Right ventricle myocardium inferior (tissue), 1 donor: ENCODE measurements at regions of chr17 and their contacts with region 1.

Region 1: DNA sequence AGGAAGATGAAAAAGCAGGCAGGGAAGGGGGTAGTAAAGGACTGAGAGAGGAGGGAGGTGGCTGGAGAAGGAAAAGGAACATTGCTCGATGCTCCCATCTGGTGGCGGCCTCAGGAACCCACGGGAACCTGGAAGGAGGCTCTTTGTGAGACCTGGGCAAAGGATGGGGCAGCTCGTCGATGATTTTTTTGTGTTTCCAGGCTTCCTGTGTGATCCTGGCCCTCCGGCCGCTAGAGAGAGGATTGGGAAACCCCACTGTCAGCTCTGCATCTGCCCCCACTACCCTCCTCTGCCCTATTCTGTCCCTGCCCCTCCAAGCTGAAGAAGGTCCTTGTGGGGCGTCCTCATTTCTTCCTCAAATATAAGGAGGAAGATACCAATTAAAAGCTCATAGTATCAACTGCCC is 6.6 kb downstream of the WFIKKN2 start:
- DNase-seq: no peak
- ATAC-seq: peak; percentile 58

Region 2: DNA sequence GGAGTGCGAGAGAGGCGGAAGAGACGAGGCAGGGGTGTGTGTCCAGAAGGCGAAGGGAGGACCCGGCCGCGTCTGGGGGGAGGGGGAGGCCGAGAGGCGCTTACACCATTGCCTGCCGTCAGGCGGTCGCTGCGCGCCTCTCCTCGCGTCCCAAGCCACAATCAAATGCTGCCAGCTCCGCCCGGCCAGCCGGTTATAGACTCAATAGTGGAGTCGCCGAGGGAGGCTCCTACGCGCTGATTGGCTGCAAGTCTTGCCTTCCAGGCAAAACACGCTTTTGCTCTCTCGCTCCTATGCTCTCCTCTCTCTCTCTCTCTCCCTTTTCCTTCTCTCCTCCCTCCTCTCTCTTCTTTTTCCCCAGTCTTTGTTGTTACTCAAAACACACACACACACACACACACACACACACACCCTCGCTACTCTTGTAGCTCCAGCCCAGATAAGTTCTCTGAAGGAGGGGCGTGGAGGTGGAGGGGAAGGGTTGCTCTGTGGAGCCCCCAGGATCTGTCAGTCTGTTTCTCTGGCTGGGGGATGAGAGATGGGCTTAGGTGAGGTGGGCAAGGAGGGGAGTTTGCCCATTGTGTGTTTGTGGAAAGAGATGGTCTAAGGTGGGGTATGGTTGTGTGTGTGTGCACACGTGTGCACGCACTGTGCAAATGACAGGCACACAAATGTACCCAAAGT is 846.8 kb before region 1 on chr17 and contains the start of gene DLX3:
- intact Hi-C with region 1: no loop called
- DNase-seq: peak; percentile 85
- ATAC-seq: peak; percentile 47
- total RNA-seq, gene DLX3: not detected

Region 3: GRCh38 chr17:50816771-50817751 is 24.9 kb before region 1 on chr17:
- intact Hi-C with region 1: loop called (anchors 2 kb)
- DNase-seq: no peak
- ATAC-seq: no peak

Region 4: DNA sequence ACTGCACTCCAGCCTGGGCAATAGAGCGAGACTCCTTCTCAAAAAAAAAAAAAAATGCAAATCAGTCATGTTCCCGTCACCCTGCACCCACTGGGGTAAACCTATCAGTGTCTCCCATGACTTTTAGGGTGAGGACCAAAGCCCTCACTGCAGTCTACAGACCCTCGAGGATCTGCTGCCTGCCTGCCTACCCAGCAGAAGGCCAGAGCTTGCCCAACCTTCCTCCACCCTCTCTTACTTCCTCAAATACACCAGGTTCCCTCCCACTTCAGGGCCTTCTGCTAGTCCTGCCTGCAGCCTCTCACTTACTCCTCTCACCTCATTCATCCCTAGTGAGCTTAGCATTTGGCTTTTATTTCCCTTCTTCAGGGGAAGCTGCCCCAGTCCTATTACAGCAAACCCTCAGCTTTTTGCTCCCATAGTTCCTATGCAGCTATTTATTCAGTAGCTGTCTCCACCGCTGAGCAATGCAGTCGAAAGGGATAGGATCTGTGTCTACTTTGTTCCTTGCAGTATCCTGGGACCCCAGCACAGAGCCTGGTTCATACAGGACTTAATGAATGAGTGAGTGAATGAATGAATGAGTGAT is 42.0 kb after region 1 on chr17:
- intact Hi-C with region 1: no loop called
- DNase-seq: no peak
- ATAC-seq: peak; percentile 55